ENCODE measurements at regions of chr19 and their contacts with region 1.

Region 1: GRCh38 chr19:51158474-51159129 is 16.5 kb downstream of the SIGLEC7 start:
- DNase-seq: peak; percentile 37
- H3K4me3 ChIP-seq: no peak overlapping the region
- H3K27ac ChIP-seq: no peak overlapping the region
- H3K4me1 ChIP-seq: no peaks in the 10 kb centered on the region
- H3K27me3 ChIP-seq: no peaks in the 10 kb centered on the region
- CTCF ChIP-seq: peak; percentile 86 to 93

Region 2: DNA sequence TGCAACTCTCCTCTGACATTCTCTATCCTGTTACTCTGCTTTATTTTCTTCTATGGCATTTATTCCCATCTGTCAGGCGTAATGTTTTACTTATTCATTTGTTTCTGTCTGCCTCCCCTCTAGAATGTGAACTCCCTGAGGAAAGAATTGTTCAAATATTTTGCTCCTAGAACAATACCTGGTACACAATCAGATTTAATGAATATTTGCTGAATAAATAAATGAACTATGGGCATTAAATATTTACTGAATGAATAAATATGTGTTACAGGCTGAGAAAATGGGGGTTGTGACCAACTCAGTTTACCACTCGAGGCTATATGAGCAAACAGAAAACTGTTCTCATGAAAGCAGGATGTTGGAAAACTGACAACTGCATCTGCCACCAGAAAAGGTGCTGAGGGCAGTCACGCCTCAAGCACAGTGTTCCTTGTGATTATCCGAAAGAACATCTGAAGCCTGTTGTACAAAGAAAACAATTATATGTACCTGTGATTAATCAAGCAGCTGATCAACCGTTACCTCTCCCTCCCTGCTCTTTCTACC is 87.7 kb before region 1 on chr19:
- CTCF ChIA-PET with region 1: no interaction called
- dilution Hi-C with region 1: no loop called
- in situ Hi-C with region 1: no loop called
- intact Hi-C with region 1: no loop called
- DNase-seq: peak; percentile 58
- H3K4me3 ChIP-seq: no peak overlapping the region
- H3K27ac ChIP-seq: peak overlapping the region; percentile 23
- H3K4me1 ChIP-seq: peaks cover 11% of the 10 kb centered on the region
- H3K27me3 ChIP-seq: no peaks in the 10 kb centered on the region
- CTCF ChIP-seq: no peak

Region 3: DNA sequence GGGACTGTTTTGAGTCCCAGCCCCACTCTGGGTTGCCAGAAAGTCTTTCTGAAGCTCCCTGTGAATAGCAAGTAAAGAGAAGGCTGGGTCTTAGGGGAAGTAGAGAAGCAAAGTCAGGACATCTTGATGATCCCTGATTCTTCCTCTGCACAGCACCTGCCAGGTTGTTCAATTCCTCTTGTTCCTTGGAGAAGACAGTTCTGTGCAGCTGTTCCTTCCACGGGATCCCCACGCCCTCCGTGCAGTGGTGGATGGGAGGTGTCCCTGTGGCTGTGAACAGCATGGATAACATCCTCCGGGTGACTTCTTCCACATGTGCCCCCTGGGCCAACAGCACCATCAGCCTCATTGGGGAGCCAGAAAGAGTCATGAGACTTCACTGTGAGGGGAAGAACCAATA is 123.7 kb after region 1 on chr19:
- CTCF ChIA-PET with region 1: no interaction called
- dilution Hi-C with region 1: no loop called
- in situ Hi-C with region 1: no loop called
- intact Hi-C with region 1: no loop called
- DNase-seq: no peak
- H3K4me3 ChIP-seq: no peak overlapping the region
- H3K27ac ChIP-seq: no peak overlapping the region
- H3K4me1 ChIP-seq: no peaks in the 10 kb centered on the region
- H3K27me3 ChIP-seq: no peaks in the 10 kb centered on the region
- CTCF ChIP-seq: no peak

Region 4: GRCh38 chr19:51480590-51480989 is 322.0 kb after region 1 on chr19:
- CTCF ChIA-PET with region 1: interaction called, 11 read pairs
- dilution Hi-C with region 1: no loop called
- in situ Hi-C with region 1: no loop called
- intact Hi-C with region 1: no loop called
- DNase-seq: no peak
- H3K4me3 ChIP-seq: no peak overlapping the region
- H3K27ac ChIP-seq: no peak overlapping the region
- H3K4me1 ChIP-seq: no peaks in the 10 kb centered on the region
- H3K27me3 ChIP-seq: no peaks in the 10 kb centered on the region
- CTCF ChIP-seq: no peak

Region 5: DNA sequence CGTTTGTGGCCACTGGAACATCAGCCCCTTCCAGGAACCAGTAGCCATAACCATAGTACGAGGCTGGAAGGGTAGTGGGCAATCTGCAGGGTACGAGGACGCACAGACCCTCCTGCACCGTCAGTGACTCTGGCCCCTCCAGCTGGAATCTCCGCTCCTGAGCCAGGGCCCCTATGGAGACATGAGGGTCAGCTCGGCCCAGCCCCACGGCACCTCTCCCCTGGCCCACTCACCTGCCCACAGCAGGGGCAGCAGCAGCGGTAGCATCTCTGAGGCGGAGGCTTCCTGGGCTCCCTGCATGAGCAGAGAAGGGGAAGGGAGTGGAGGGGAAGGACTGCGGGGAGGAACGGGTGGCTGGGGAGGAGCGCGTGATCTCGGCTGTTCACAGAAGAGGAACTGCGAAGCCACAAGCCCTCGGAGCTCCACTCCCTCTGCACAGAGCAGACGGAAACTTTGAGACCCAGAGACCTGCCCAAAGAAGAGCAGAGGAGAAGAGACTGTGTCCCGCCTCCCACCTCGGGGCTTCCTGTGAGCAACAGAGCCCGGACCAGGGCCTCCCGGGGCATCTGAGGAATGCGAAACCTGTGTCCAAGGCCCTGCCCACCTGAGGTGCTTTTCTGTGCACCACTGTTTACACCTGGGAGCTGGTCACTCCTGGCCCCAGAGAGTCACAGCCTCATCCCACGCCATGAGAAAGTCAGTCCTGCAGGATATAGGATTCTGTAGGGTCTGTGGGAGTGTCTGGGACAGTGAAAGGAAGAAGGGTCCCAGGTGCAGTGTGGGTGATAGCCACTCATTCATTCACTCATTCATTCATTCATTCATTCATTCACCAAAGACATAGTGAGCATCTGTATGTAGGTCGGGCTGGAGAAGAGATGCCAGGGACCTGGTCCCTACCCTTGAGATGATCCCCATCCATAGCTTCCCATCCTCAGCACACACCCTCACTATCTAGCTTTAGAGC is 373.0 kb after region 1 on chr19 and contains the start of gene SIGLEC6:
- CTCF ChIA-PET with region 1: no interaction called
- dilution Hi-C with region 1: no loop called
- in situ Hi-C with region 1: no loop called
- intact Hi-C with region 1: no loop called
- DNase-seq: no peak
- H3K4me3 ChIP-seq: no peak within 1 kb of the TSS
- H3K27ac ChIP-seq: no peak within 1 kb of the TSS
- H3K4me1 ChIP-seq: no peaks in the 10 kb centered on the region
- H3K27me3 ChIP-seq: no peaks in the 10 kb centered on the region
- CTCF ChIP-seq: no peak
- total RNA-seq, gene SIGLEC6: not detected

Measured in mammary epithelial cell (primary cell).